Left cardiac atrium (tissue), 4 donors: ENCODE measurements at regions of chr4 and their contacts with region 1.

Region 1: GRCh38 chr4:125464146-125464545 is 149.4 kb downstream of the FAT4 start:
- DNase-seq: no peak
- ATAC-seq: no peak

Region 2: DNA sequence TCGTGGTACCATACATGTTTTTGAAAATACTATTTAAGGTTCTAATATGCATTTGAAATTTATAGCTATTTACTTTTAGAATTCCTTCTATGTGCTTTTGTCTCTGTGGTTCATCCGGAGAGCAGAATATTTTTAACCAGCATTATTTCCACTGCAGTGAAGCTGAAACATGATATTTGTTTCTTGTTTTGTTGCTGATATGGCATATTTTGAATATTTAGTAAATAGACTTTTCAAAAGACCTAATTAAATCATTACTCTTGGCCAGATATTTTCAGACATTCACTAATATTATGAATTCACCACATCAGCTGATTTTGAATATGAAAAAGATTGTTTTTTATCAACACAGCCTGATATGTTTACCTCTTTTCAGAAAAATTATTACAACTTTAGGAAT is 62.4 kb before region 1 on chr4:
- intact Hi-C with region 1: no loop called
- DNase-seq: no peak
- ATAC-seq: no peak

Region 3: DNA sequence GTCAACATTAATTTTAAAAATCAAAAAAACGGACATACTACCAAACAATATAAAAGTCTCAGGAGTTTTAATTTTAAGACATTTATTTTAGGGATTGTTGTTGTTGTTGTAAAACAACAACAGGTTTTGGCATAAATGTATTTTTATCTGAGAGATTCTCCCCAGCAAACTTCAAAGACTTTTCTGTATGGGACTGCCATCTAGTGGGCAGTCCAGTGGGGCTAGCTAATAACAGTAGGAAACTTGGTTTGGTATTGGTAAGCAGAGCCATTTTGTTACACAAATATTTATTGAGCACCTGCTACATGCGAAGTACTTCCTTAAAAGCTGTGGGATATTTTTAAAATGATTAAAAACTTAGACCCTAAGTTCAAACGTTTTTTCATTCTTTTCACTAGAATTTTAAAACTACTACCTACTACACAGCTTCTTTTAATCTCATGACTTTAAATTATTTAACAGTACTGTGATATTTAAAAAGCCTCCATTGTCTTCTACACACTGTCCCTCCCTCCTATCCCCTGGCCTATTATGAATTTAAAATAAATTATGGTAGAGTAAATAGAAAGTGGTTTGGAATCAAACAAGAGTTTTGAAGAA is 1140.2 kb after region 1 on chr4:
- intact Hi-C with region 1: loop called in 1 of 2 experiments (anchors 10 kb)
- DNase-seq: peak; percentile 27
- ATAC-seq: peak in 1 of 2 donors; percentile 45